ENCODE measurements at regions of chr14 and their contacts with region 1.

Region 1: GRCh38 chr14:53055003-53055402 is 98.1 kb downstream of the DDHD1 start:
- DNase-seq: no peak
- ATAC-seq: peak in 3 of 4 donors; percentile 53 to 81 (median 68)
- H3K4me3 ChIP-seq: no peak overlapping the region
- H3K27ac ChIP-seq: no peak overlapping the region
- H3K4me1 ChIP-seq: no peaks in the 10 kb centered on the region
- H3K27me3 ChIP-seq: no peaks in the 10 kb centered on the region
- CTCF ChIP-seq: peak; percentile 78

Region 2: GRCh38 chr14:52824507-52824906 is 230.5 kb before region 1 on chr14:
- intact Hi-C with region 1: loop called (anchors 1 to 5 kb)
- DNase-seq: no peak
- ATAC-seq: no peak
- H3K4me3 ChIP-seq: no peak overlapping the region
- H3K27ac ChIP-seq: no peak overlapping the region
- H3K4me1 ChIP-seq: no peaks in the 10 kb centered on the region
- H3K27me3 ChIP-seq: no peaks in the 10 kb centered on the region
- CTCF ChIP-seq: no peak

Region 3: GRCh38 chr14:52840916-52841315 is 214.1 kb before region 1 on chr14:
- intact Hi-C with region 1: no loop called
- DNase-seq: no peak
- ATAC-seq: peak in 1 of 4 donors; percentile 44
- H3K4me3 ChIP-seq: no peak overlapping the region
- H3K27ac ChIP-seq: no peak overlapping the region
- H3K4me1 ChIP-seq: peaks cover 5% of the 10 kb centered on the region
- H3K27me3 ChIP-seq: no peaks in the 10 kb centered on the region
- CTCF ChIP-seq: no peak

Region 4: GRCh38 chr14:52961060-52961639 is 93.9 kb before region 1 on chr14:
- intact Hi-C with region 1: loop called in 1 of 2 experiments (anchors 5 kb)
- DNase-seq: peak; percentile 29 to 55
- ATAC-seq: peak; percentile 89 to 97 (median 93)
- H3K4me3 ChIP-seq: no peak overlapping the region
- H3K27ac ChIP-seq: peak overlapping the region; percentile 56
- H3K4me1 ChIP-seq: peaks cover 4% of the 10 kb centered on the region
- H3K27me3 ChIP-seq: no peaks in the 10 kb centered on the region
- CTCF ChIP-seq: peak; percentile 73

Region 5: DNA sequence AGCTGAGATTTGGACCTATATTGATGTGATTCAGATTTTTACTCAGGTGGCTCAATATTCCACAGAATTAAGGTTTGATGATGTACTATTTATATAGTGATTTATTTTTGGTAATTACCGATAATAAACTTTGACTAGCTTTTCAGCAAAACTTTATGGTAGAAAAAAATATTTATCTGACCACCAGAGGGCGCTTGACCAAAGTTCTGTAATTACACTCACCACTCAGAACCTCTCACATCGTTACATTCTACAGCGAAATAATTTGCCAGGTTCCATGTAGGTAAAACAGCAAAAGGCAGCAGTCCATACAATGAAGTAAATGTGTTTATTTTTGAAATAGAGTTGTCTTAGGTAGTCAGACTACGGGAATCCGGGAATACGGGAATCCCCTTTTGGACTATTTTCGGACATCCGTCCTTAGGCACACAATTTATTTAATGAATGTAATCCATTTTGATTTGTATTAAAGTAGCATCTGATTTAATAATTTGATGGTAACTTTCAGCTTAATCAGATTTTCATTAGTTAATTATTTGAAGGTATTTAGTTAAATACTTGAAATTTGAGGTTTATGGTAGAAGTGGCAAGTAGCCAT is 241.1 kb after region 1 on chr14:
- intact Hi-C with region 1: no loop called
- DNase-seq: no peak
- ATAC-seq: no peak
- H3K4me3 ChIP-seq: no peak overlapping the region
- H3K27ac ChIP-seq: no peak overlapping the region
- H3K4me1 ChIP-seq: no peaks in the 10 kb centered on the region
- H3K27me3 ChIP-seq: no peaks in the 10 kb centered on the region
- CTCF ChIP-seq: peak; percentile 72

Region 6: GRCh38 chr14:53306267-53306721 is 251.3 kb after region 1 on chr14:
- intact Hi-C with region 1: loop called in 1 of 2 experiments (anchors 2 kb)
- DNase-seq: peak; percentile 57 to 62
- ATAC-seq: peak; percentile 49 to 86 (median 62)
- H3K4me3 ChIP-seq: peak overlapping the region; percentile 59
- H3K27ac ChIP-seq: no peak overlapping the region
- H3K4me1 ChIP-seq: no peaks in the 10 kb centered on the region
- H3K27me3 ChIP-seq: no peaks in the 10 kb centered on the region
- CTCF ChIP-seq: peak; percentile 77